HCT116 (cell line): ENCODE measurements at regions of chr17 and their contacts with region 1.

Region 1: GRCh38 chr17:50114849-50115357 is 15.1 kb downstream of the SAMD14 start:
- DNase-seq: peak; percentile 66
- ATAC-seq: peak; percentile 51
- H3K4me3 ChIP-seq: no peak overlapping the region
- H3K27ac ChIP-seq: no peak overlapping the region
- H3K4me1 ChIP-seq: peaks cover 7 to 22% of the 10 kb centered on the region in 2 experiments; a peak in 3 of 4 replicates
- H3K27me3 ChIP-seq: peaks cover 6% of the 10 kb centered on the region; the same call in 1 of the 2 replicates
- CTCF ChIP-seq: peak; percentile 88 to 98 (median 92)
- POLR2A ChIP-seq: no peak
- RAD21 ChIP-seq: no peak; the same call in 1 of the 2 replicates

Region 2: DNA sequence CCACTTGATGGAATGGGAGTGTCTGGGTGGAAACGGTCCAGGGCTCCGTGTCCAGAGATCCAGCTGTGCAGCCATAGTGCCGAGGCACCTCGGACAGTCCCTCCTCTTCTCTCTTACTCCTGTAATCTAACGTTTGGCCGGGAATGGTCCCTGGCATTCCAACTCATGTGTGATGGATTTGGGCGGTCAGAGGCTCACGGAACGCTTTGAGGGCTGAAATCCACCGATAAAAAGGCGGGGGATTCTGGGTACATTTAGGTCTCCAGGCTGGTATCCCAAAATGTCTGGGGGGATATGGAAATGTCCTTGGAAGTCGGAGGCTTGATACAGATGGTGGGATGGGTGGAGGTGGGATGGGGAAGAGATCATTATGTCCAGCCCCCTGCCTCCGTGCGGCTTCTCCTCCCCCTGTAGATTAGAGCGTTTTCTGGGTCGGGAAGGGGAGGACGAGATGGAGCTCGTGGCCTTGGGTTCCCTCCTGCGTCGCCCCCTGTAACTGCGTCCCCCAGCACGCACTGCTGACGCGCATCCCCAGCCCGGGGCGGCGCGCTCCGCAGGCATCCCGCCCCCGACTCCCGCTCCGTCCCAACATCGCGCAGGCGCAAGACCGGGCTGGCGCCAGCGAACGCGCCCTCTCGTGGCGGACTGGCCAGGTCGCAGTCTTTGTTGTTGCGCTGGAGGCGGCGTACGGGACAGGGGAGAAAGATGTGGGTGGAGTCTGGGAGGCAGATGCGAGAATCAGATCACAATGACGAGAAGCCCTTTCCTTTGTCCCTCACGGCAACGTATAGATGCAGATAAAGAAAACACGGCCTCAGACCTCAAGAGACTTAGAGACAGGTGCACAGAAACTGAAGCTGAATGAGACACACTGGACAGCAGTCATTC is 46.4 kb after region 1 on chr17:
- CTCF ChIA-PET with region 1: interaction called, 8 read pairs
- POLR2A ChIA-PET with region 1: no interaction called
- RAD21 ChIA-PET with region 1: no interaction called
- intact Hi-C with region 1: loop called (anchors 2 kb)
- DNase-seq: peak; percentile 86
- ATAC-seq: peak; percentile 95
- H3K4me3 ChIP-seq: peak overlapping the region; percentile 46 to 59
- H3K27ac ChIP-seq: no peak overlapping the region; the same call in 1 of the 2 replicates
- H3K4me1 ChIP-seq: peaks cover 20 to 34% of the 10 kb centered on the region in 2 experiments
- H3K27me3 ChIP-seq: no peaks in the 10 kb centered on the region
- CTCF ChIP-seq: peak; percentile 97 to 98 (median 97)
- POLR2A ChIP-seq: peak; percentile 81
- RAD21 ChIP-seq: peak; percentile 90

Region 3: GRCh38 chr17:50177983-50178834 is 63.3 kb after region 1 on chr17:
- CTCF ChIA-PET with region 1: interaction called, 11 read pairs
- POLR2A ChIA-PET with region 1: no interaction called
- RAD21 ChIA-PET with region 1: no interaction called
- intact Hi-C with region 1: no loop called
- DNase-seq: peak; percentile 90
- ATAC-seq: peak; percentile 94
- H3K4me3 ChIP-seq: peak overlapping the region; percentile 22 to 43
- H3K27ac ChIP-seq: peak overlapping the region; percentile 61
- H3K4me1 ChIP-seq: peaks cover 41 to 56% of the 10 kb centered on the region in 2 experiments
- H3K27me3 ChIP-seq: no peaks in the 10 kb centered on the region
- CTCF ChIP-seq: peak; percentile 80 to 96 (median 82)
- POLR2A ChIP-seq: no peak
- RAD21 ChIP-seq: peak; percentile 72